ENCODE measurements at regions of chr2 and their contacts with region 1.

Region 1: DNA sequence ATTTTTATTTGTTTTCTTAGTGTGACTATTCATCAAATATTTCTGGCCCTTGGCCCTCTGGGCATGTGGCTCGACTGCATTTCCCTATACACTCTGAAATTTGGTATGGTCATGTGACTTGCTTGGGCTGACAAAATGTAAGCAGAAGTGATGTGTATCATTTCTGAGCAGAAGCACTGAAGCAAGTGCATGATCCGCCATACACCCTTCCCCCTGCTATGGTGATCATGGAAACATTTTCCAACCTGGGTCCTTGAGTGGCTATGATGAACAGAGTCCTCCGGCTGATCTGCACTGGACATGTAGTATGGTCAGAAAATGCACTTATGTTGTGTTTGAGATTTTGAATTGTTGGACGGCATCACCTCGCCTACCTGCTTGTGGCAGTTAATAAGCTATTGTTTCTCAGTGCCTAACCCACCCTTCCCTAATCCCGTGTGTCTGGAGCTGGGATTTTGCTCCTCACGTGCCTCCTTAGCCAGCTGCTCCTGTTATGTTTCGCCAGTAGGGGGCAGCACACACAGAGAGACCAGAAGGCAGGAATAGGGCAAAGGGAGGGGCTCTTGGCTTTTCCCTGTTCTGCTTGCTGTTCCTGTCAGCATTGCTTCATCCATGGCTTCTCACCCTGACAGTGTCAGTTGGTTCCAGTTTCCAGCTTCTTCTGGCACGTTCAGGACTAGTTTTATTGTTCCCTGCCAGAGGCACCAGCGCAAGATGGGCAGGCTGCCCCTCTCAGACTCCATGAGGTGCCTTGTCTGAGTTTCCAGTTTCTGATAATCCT is 207.3 kb downstream of the ARL6IP6 start:
- DNase-seq: peak; percentile 45
- CTCF ChIP-seq: peak; percentile 92

Region 2: DNA sequence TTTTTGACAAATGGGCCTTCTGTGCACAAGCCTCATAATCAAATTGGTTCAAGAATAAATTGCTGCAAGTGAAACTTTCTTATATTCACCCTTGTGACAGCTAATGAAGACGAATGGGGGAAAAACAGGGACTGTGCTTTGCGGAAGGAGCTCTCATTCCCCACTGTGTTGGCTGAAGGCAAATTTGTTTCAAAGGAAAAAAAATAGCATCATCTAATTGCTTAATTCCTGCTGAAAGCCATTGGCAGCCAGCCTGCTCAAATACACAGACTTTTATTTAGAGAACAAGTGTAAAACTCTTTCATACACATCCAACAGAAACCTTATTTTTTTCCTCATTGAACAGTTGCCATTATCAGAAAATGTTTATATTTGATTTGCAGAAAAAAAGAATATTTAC is 35.0 kb before region 1 on chr2:
- in situ Hi-C with region 1: no loop called
- DNase-seq: no peak
- CTCF ChIP-seq: no peak

Region 3: DNA sequence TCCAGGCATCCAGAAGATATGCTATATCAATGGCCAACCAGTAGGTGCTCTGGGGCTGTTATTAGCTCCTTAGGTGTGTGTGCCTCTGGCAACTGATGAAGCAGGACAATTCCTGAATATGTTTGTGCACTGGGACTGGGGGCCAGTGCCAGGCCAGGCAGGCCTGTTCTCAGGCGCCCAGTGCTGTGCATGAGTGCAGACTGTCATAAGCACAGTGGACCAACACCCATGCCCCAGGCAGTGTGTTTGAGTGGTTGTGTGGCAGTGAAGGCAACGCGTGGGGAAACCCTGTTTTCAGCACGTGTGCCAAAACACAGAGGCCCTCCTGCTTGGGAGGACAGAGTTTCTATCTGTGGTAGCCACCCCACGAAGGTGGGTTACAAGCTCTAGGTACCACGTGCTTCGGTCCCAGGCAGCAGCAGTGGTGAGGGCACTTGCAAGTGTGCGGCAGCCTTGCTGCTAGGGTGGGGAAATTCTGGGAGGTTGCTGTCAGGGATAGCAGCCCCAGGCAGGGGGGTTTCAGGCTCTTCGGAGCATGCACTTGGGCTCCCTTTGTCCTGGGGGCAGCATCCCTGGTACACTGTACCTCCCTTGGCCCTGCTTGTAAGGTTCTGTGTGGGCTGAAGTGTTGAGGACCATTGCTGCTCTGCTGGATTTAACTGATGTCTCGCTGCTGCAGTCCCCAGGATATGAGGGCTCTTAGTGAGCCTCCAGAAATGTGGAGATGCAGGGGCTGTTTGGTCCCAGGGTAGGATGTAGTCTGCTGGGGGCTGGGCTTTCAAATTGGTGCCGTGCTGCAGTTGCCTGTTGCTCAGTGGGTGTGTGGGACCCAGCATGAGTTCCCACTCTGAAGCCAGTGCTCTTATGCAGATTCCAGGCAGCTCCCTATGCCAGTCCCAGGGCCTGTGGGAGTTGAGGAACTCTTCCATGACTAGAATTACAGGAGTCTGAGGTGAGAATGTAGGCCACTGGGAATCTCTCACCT is 272.0 kb after region 1 on chr2:
- in situ Hi-C with region 1: no loop called
- DNase-seq: no peak
- CTCF ChIP-seq: no peak

Region 4: DNA sequence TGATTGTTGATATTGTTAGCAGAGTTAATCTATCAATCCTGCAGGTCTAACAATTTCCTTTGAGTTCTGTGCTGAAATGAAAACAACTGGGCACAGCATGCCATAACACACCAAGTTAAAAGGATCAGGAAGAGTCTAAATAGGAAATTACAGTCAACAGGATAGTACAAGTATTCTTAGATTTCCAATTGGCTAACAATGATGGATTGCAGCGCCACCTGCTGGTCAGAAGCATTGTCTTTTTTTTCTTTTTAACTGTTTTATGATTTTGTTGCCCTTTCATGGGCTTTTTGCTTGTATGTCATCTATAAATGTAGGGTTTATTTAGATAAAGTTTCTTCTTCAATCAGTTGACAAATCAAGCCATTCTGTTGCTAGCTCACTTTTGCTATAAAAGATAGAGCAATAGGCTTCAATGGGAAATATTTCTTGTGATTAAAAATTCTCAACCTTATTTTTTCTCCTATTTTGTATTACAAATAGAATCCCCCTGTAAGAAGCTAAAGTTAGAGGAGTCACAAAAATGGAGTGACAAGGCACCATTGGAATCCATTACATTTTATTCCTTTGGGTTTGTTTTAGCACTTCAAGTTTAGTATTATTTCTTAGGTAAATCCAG is 593.6 kb after region 1 on chr2:
- in situ Hi-C with region 1: loop called (anchors 25 kb)
- DNase-seq: peak; percentile 37
- CTCF ChIP-seq: peak; percentile 72